Endothelial cell of umbilical vein (primary cell): ENCODE measurements at regions of chr17 and their contacts with region 1.

Region 1: DNA sequence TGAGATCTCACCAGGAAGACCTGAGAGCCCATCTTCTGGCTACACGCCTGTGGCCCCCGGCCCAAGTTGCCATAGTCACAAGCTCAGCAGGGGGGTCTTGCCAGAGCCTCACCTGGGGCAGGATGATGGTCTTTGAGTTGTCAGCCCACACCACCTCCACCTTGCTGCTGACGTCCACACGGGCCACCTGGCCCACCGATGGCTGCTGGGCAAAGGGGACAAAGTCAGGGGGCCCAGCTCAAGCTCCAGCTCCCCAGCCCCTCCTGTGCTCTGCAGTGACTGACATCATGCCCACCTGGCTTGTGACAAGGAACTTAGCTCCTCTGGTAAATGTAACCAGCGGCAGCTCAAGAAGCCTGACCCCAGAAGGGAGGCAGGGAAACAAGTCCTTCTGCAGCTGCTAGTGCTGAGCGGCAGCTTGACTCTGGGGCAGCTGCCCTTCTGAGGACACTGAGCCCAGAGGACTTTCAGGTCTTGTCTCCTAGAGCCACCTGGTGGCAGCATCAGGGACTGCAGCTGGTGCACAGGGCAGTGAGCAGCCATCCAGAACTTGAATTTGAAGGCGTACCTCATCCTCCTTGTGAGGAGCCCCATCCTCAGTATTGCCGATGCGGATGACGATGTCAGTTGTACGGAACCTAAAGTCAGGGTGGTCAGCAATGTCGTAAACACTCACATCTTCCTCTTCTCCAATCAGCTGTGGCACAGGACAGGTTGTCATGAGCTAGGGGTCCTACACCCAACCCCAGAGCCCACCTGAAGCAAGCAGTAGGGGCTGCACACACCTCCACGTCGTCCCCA is 13.5 kb downstream of the SPHK1 start:
- DNase-seq: peak; percentile 81
- H3K4me3 ChIP-seq: no peak overlapping the region
- H3K27ac ChIP-seq: no peak overlapping the region
- H3K4me1 ChIP-seq: no peaks in the 10 kb centered on the region
- H3K27me3 ChIP-seq: no peaks in the 10 kb centered on the region
- CTCF ChIP-seq: peak; percentile 92 to 93
- POLR2A ChIP-seq: no peak

Region 2: DNA sequence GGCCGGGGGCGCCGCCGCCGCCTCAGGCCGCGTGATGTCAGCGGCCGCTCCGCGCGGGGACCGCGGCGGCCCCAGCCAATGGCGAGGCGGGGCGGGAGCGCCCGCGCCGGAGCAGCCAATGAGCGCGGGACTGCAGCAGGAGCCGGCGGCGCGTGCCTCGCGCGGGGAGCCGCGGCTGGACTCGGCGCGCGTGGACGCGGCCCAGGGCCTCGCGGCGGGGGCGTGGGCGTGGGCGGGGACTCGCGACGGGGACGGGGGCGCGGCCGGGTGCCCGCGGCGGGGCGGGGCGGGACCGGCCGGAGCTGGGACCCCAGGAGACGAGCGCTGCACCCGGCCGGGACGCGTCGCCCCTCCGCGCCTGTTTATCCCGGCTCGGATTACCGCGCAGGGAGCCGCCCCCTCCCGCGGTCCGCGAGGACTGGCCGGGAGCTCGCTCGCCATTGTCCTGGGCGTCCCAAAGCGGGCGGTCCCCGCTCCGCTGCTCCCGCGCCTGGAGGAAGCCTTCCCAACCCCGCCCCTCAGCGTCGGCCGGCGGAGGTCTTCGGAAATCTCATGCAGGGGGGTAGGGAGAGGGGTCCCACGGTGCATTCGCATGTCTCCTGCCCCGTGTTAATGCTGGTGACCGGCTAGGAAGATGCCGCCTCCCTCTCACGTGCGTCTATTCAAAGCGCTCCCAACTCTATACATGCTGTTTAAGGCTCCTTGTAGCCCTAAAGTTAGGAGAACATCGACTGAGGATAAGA is 157.3 kb before region 1 on chr17 and contains the start of gene RNF157:
- CTCF ChIA-PET with region 1: no interaction called
- POLR2A ChIA-PET with region 1: no interaction called
- dilution Hi-C with region 1: no loop called
- intact Hi-C with region 1: no loop called
- DNase-seq: peak; percentile 53
- H3K4me3 ChIP-seq: peak within 1 kb of the TSS; percentile 20 to 54 (median 37)
- H3K27ac ChIP-seq: no peak within 1 kb of the TSS
- H3K4me1 ChIP-seq: peaks cover 7% of the 10 kb centered on the region
- H3K27me3 ChIP-seq: peaks cover 46 to 53% of the 10 kb centered on the region in 2 experiments
- CTCF ChIP-seq: no peak
- POLR2A ChIP-seq: no peak
- total RNA-seq, gene RNF157: 0.48 and 0.86 TPM in 2 replicates

Region 3: DNA sequence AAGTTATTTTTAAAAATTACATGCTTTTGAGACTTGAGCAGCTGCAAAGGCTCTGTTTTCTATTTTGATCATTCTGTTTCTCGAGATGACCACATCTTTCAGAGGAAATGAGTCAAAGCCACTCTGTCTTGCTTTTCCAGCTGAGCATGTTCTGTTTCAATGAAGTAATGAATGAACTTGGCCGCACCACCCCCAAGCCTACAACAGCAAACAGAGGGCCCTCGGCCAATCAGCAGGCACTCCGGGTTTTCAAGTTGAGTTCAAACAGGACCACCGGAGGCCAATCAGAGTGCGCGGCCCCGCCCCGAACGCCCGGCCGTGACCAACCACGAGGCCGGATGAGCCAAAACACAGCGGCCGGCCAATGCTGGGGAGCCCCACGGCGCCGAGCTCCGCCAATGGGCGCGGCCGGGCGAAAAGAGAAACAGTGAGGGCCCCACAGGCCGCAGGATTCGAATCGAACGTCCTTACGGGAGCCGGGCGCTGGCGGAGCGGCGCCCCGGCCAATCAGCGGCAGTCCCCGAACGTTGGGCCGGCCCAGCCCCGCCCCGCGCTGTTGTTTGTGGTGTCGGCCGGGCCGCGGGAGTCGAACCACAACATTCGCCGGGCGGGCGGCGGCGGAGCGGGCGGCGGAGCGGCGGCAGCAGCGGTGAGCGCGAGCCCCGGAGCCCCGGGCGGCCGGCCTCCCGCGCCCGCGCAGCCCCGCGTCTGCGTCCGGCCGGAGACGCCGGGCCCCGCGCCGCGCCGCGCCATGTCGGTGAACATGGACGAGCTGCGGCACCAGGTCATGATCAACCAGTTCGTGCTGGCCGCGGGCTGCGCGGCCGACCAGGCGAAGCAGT is 132.9 kb before region 1 on chr17 and contains the start of gene UBALD2:
- CTCF ChIA-PET with region 1: no interaction called
- POLR2A ChIA-PET with region 1: no interaction called
- dilution Hi-C with region 1: no loop called
- intact Hi-C with region 1: no loop called
- DNase-seq: peak; percentile 100
- H3K4me3 ChIP-seq: peak within 1 kb of the TSS; percentile 78 to 84 (median 80)
- H3K27ac ChIP-seq: peak within 1 kb of the TSS; percentile 97
- H3K4me1 ChIP-seq: peaks cover 54% of the 10 kb centered on the region
- H3K27me3 ChIP-seq: no peaks in the 10 kb centered on the region
- CTCF ChIP-seq: no peak
- POLR2A ChIP-seq: peak; percentile 42
- total RNA-seq, gene UBALD2: 70.9 and 75.2 TPM in 2 replicates

Region 4: GRCh38 chr17:76307299-76307965 is 90.5 kb before region 1 on chr17:
- CTCF ChIA-PET with region 1: interaction called, 155 read pairs
- POLR2A ChIA-PET with region 1: no interaction called
- dilution Hi-C with region 1: no loop called
- intact Hi-C with region 1: loop called (anchors 1 kb)
- DNase-seq: no peak
- H3K4me3 ChIP-seq: no peak overlapping the region
- H3K27ac ChIP-seq: no peak overlapping the region
- H3K4me1 ChIP-seq: no peaks in the 10 kb centered on the region
- H3K27me3 ChIP-seq: no peaks in the 10 kb centered on the region
- CTCF ChIP-seq: no peak
- POLR2A ChIP-seq: no peak

Region 5: DNA sequence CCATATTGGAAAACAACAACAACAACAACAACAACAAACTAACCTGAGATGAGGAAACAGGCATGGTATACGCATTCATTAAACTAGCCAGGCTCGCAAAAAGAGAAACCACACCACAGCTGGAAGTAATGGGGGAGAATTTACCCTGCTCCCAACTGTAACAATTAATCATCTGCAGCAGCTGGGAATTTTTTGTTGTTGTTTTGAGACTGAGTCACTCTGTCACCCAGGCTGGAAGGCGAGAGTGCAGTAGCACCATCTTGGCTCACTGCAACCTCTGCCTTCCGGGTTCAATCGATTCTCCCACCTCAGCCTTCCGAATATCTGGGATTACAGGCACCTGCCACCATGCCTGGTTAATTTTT is 60.5 kb before region 1 on chr17:
- CTCF ChIA-PET with region 1: interaction called, 17 read pairs
- POLR2A ChIA-PET with region 1: no interaction called
- dilution Hi-C with region 1: no loop called
- intact Hi-C with region 1: no loop called
- DNase-seq: peak; percentile 30
- H3K4me3 ChIP-seq: no peak overlapping the region
- H3K27ac ChIP-seq: no peak overlapping the region
- H3K4me1 ChIP-seq: no peaks in the 10 kb centered on the region
- H3K27me3 ChIP-seq: no peaks in the 10 kb centered on the region
- CTCF ChIP-seq: no peak
- POLR2A ChIP-seq: no peak

Region 6: DNA sequence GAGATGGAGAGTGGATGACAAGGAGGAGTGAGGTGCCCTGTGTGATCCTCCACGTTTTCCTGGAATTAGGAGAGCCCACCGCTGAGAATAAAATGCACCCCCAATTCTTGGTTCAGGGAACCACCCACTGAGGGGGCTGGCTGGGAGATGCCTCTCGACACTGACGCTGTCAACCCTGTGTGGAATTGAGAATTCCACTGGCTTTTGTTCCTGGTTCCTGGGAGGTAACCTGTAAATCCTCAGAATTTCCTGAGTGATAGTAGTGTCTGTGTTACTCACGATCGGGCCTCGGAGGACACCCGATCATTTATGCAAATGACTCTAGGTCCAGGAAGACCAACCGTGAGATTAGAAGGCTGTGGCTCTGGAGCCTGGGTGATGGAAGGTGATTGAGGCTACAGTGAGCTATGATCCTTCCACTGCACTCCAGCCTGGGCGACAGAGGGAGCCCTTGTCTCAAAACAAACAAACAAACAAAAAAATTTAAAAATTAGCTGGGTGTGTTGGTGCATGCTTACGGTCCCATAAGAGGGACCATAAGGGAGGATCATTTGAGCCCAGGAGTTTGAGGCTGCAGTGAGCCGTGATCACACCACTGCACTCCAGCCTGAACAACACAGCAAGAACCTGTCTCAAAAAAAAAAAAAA is 32.5 kb before region 1 on chr17:
- CTCF ChIA-PET with region 1: interaction called, 103 read pairs
- POLR2A ChIA-PET with region 1: no interaction called
- dilution Hi-C with region 1: no loop called
- intact Hi-C with region 1: loop called (anchors 1 kb)
- DNase-seq: no peak
- H3K4me3 ChIP-seq: no peak overlapping the region
- H3K27ac ChIP-seq: no peak overlapping the region
- H3K4me1 ChIP-seq: peaks cover 6% of the 10 kb centered on the region
- H3K27me3 ChIP-seq: no peaks in the 10 kb centered on the region
- CTCF ChIP-seq: peak; percentile 30 to 33
- POLR2A ChIP-seq: no peak

Region 7: GRCh38 chr17:76408052-76408849 is 10.4 kb after region 1 on chr17:
- CTCF ChIA-PET with region 1: interaction called, 13 read pairs
- POLR2A ChIA-PET with region 1: no interaction called
- dilution Hi-C with region 1: no loop called
- intact Hi-C with region 1: no loop called
- DNase-seq: peak; percentile 66
- H3K4me3 ChIP-seq: no peak overlapping the region
- H3K27ac ChIP-seq: no peak overlapping the region
- H3K4me1 ChIP-seq: no peaks in the 10 kb centered on the region
- H3K27me3 ChIP-seq: no peaks in the 10 kb centered on the region
- CTCF ChIP-seq: peak; percentile 92
- POLR2A ChIP-seq: no peak

Region 8: GRCh38 chr17:76557368-76558197 is 159.7 kb after region 1 on chr17:
- CTCF ChIA-PET with region 1: no interaction called
- POLR2A ChIA-PET with region 1: no interaction called
- dilution Hi-C with region 1: no loop called
- intact Hi-C with region 1: no loop called
- DNase-seq: peak; percentile 98
- H3K4me3 ChIP-seq: peak overlapping the region; percentile 66 to 94 (median 78)
- H3K27ac ChIP-seq: peak overlapping the region; percentile 68
- H3K4me1 ChIP-seq: peaks cover 40% of the 10 kb centered on the region
- H3K27me3 ChIP-seq: no peaks in the 10 kb centered on the region
- CTCF ChIP-seq: peak; percentile 80 to 88
- POLR2A ChIP-seq: peak; percentile 97